Adrenal gland (tissue), 19 donors: ENCODE measurements at regions of chr11 and their contacts with region 1.

Region 1: DNA sequence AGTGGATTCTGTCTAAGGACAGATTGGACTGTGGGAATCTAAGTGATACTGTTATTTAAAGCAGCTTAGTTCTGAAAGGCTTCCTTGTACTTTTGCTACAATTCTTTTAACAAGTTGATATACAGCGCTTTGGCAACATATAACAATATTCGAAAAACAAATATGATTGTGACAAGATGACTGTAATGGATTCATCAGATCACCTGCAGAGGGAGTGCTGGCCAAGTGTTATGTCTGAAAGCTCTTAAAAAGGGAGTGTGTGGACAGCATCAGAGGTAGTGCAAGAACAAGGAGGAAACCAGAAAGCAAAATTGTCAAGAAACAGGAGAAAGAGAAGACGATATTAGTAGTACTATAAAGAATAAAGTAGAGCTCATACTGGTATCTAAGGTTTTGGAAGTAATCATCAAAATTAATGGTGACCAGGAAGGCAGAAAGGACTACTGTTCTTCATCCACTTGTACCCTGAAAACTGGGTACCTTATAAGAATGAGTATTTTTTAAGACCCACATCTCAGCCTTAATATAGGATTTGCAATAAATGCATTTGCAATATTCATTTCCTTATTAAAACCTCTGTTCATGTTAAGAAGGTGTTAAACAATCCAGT is 1112.0 kb upstream of the CCDC90B start:
- DNase-seq: peak in 6 of 7 donors; percentile 18 to 64 (median 24)
- H3K4me3 ChIP-seq: no peak overlapping the region
- H3K27ac ChIP-seq: no peak overlapping the region
- H3K4me1 ChIP-seq: no peaks in the 10 kb centered on the region
- H3K27me3 ChIP-seq: no peaks in the 10 kb centered on the region
- CTCF ChIP-seq: peak; percentile 16 to 57 (median 47)
- POLR2A ChIP-seq: no peak

Region 2: DNA sequence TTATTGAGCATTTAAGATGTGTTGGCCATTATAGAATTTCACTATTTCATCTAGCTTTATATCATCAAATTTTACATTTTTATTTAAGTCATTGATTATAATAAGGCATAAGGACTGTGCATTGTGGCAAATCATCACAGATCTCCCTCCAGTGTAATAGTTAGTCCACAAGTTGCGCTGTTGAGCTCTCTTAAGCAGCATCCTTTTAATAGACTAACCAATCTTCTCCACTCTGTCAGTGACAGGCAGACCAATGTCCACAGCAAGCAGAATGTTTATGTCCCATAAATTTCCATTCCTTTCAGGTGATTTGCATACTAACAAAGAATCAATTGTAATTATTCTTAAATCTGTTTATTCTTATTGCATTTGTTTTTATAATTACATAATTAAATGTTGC is 516.7 kb before region 1 on chr11:
- intact Hi-C with region 1: no loop called
- DNase-seq: no peak
- H3K4me3 ChIP-seq: no peak overlapping the region
- H3K27ac ChIP-seq: no peak overlapping the region
- H3K4me1 ChIP-seq: no peaks in the 10 kb centered on the region
- H3K27me3 ChIP-seq: no peaks in the 10 kb centered on the region
- CTCF ChIP-seq: no peak
- POLR2A ChIP-seq: no peak

Region 3: DNA sequence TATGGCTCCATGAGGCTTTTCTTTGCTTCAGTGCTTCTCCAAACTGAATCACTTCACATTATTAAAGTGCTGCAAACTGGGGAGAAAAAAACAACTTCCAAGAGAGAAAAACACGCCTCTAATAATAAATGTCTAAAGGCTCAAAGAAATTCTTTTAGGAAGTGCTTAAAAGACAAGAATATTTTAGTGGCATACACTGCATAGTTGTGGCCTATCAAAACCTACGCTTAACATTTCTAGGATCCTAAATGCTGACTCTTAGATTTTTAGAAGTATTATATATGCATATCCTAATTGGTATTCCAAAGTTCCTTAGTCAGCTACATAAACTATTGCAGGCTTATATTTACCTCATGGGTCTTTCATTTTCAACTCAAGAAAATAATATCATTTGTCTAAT is 233.0 kb before region 1 on chr11:
- intact Hi-C with region 1: no loop called
- DNase-seq: no peak
- H3K4me3 ChIP-seq: no peak overlapping the region
- H3K27ac ChIP-seq: no peak overlapping the region
- H3K4me1 ChIP-seq: no peaks in the 10 kb centered on the region
- H3K27me3 ChIP-seq: no peaks in the 10 kb centered on the region
- CTCF ChIP-seq: no peak
- POLR2A ChIP-seq: no peak

Region 4: DNA sequence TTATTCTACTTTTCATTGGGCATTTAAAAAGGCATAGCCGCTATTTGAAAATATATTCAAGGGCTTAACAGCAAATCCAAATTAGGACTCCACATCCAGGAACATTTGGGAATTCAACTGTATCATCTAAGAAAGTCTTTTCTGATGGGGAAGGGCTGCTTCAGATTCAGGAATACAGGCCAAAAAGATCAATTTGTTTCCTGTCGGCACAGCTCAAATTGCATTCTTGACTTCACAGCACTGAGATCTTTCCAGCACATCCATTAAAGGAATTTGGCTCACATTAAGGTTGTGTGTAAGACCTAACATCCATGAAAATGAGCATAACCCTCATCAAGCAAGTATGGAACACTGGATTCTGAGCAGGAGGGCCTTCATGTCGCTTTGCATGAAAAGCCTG is 57.6 kb after region 1 on chr11:
- intact Hi-C with region 1: no loop called
- DNase-seq: no peak
- H3K4me3 ChIP-seq: no peak overlapping the region
- H3K27ac ChIP-seq: no peak overlapping the region
- H3K4me1 ChIP-seq: no peaks in the 10 kb centered on the region
- H3K27me3 ChIP-seq: no peaks in the 10 kb centered on the region
- CTCF ChIP-seq: no peak
- POLR2A ChIP-seq: no peak

Region 5: GRCh38 chr11:84524422-84525051 is 126.4 kb after region 1 on chr11:
- intact Hi-C with region 1: loop called in 1 of 2 experiments (anchors 10 kb)
- DNase-seq: no peak
- H3K4me3 ChIP-seq: no peak overlapping the region
- H3K27ac ChIP-seq: peak overlapping the region in 1 of 5 donors; percentile 55
- H3K4me1 ChIP-seq: peaks cover 4 to 9% of the 10 kb centered on the region in 2 donors
- H3K27me3 ChIP-seq: no peaks in the 10 kb centered on the region
- CTCF ChIP-seq: peak; percentile 58 to 82 (median 63)
- POLR2A ChIP-seq: no peak

Region 6: DNA sequence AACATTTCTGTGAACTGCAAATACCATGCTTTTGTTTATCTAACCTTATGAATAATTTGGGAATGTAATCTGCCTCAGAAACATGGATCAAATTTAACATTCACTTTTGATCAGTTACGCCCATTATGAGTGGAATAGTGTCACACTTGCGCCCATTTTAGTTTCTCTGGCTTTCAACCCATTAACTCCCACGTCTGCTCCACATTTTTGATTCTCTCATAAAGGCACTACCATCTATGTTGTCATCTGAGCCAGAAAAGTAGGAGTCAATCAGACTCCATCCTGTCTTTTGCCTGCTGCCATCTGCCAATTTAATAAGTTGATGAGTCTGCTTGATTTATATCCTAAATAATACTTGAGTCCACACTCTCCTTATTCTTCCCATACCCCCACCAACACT is 138.3 kb after region 1 on chr11:
- intact Hi-C with region 1: loop called in 1 of 2 experiments (anchors 10 kb)
- DNase-seq: no peak
- H3K4me3 ChIP-seq: no peak overlapping the region
- H3K27ac ChIP-seq: no peak overlapping the region
- H3K4me1 ChIP-seq: peaks cover 0 to 2% of the 10 kb centered on the region in 2 donors
- H3K27me3 ChIP-seq: no peaks in the 10 kb centered on the region
- CTCF ChIP-seq: no peak
- POLR2A ChIP-seq: no peak

Region 7: GRCh38 chr11:84626256-84626655 is 228.1 kb after region 1 on chr11:
- intact Hi-C with region 1: no loop called
- DNase-seq: no peak
- H3K4me3 ChIP-seq: no peak overlapping the region
- H3K27ac ChIP-seq: no peak overlapping the region
- H3K4me1 ChIP-seq: no peaks in the 10 kb centered on the region
- H3K27me3 ChIP-seq: no peaks in the 10 kb centered on the region
- CTCF ChIP-seq: no peak
- POLR2A ChIP-seq: no peak